Mammary epithelial cell (primary cell): ENCODE measurements at regions of chr4 and their contacts with region 1.

Region 1: GRCh38 chr4:78056265-78057129 is 626 bp upstream of the FRAS1 start:
- DNase-seq: peak; percentile 83
- H3K4me3 ChIP-seq: peak overlapping the region; percentile 73 to 81 (median 76)
- H3K27ac ChIP-seq: peak overlapping the region; percentile 34
- H3K4me1 ChIP-seq: peaks cover 6% of the 10 kb centered on the region
- H3K27me3 ChIP-seq: no peaks in the 10 kb centered on the region
- CTCF ChIP-seq: peak in 1 of 2 donors; percentile 8

Region 2: DNA sequence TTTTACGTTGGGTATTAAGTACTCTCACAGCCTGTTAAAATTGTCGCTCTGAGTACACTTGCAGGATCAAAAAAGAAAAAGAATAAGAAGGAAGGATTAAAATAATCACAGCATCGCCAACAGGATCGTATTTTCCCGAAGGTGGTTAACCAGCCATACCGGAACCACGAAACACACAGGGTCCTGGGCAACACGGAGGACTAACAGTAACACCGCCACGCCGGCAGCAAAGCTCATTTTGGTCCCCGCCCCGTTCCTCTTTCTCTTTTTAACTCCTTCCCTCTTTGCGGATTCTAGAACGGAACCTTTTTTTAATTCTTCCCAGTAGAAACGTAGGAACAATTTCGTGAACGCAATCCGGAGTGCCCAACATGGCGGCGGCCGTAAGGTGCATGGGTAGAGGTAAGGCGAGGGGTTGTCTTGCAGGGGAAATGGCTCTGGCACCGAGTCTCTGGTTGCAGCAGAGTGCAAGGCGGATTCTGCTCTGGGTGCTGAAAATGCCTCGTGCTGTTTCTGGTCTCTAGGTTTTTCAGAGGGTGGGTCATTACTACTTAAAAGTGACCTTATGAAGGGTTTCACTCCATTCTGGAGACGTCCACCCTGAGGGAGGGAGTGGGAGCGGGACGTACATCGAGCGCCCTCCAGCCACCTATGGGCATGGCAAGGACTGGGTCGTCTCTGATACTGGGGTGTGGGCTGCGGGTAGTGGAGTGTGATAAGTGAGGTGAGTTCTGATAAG is 193.8 kb before region 1 on chr4 and contains the start of gene MRPL1:
- CTCF ChIA-PET with region 1: no interaction called
- dilution Hi-C with region 1: no loop called
- in situ Hi-C with region 1: no loop called
- intact Hi-C with region 1: loop called (anchors 2 kb)
- DNase-seq: peak; percentile 94
- H3K4me3 ChIP-seq: peak within 1 kb of the TSS; percentile 63 to 94 (median 78)
- H3K27ac ChIP-seq: peak within 1 kb of the TSS; percentile 97
- H3K4me1 ChIP-seq: peaks cover 8% of the 10 kb centered on the region
- H3K27me3 ChIP-seq: no peaks in the 10 kb centered on the region
- CTCF ChIP-seq: no peak
- total RNA-seq, gene MRPL1: 24.8 to 40.9 TPM

Region 3: DNA sequence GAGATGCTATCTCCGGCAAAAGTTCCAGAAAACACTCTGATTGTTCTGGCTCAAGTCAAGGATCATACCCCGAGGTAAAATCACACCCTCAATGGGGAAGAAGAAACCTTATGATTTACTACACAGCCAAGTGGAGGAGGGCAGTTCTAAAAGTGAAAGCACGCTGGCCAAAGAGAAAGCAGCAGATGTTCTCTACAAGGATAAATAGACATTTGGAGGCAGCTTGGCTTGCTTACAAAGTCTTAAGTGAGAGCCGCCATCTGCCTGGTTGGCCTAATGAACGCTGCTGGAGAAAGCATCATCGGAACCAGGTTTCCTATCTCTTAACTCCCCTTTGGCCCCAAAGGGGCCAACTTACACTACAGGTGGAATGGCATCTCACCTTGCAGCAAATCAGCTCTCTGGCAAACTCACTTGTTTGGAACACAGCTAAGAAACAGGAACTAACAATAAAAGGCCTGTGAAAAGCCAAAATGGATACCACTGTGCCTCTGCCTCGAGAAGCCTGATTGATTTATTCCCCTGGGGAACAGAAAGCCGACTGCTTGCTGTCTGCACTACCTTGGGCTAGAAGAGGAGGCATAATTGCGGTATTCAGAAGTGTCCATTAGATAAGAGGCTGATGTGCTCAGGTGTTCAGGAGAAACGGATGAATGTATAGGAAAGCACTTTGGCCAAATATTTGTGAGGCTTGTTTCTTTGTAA is 23.4 kb after region 1 on chr4:
- CTCF ChIA-PET with region 1: interaction called, 14 read pairs
- dilution Hi-C with region 1: no loop called
- in situ Hi-C with region 1: no loop called
- intact Hi-C with region 1: no loop called
- DNase-seq: no peak
- H3K4me3 ChIP-seq: no peak overlapping the region
- H3K27ac ChIP-seq: no peak overlapping the region
- H3K4me1 ChIP-seq: no peaks in the 10 kb centered on the region
- H3K27me3 ChIP-seq: no peaks in the 10 kb centered on the region
- CTCF ChIP-seq: no peak

Region 4: GRCh38 chr4:78417603-78418002 is 361.1 kb after region 1 on chr4:
- CTCF ChIA-PET with region 1: no interaction called
- dilution Hi-C with region 1: no loop called
- in situ Hi-C with region 1: no loop called
- intact Hi-C with region 1: loop called (anchors 1 kb)
- DNase-seq: peak; percentile 52
- H3K4me3 ChIP-seq: no peak overlapping the region
- H3K27ac ChIP-seq: peak overlapping the region; percentile 15
- H3K4me1 ChIP-seq: peaks cover 13% of the 10 kb centered on the region
- H3K27me3 ChIP-seq: no peaks in the 10 kb centered on the region
- CTCF ChIP-seq: no peak

Region 5: GRCh38 chr4:78551479-78552351 is 495.2 kb after region 1 on chr4 and contains the start of gene ANXA3:
- CTCF ChIA-PET with region 1: no interaction called
- dilution Hi-C with region 1: no loop called
- in situ Hi-C with region 1: no loop called
- intact Hi-C with region 1: loop called (anchors 1 kb)
- DNase-seq: peak; percentile 70
- H3K4me3 ChIP-seq: peak within 1 kb of the TSS; percentile 76 to 97 (median 82)
- H3K27ac ChIP-seq: peak within 1 kb of the TSS; percentile 100
- H3K4me1 ChIP-seq: peaks cover 39% of the 10 kb centered on the region
- H3K27me3 ChIP-seq: no peaks in the 10 kb centered on the region
- CTCF ChIP-seq: peak in 1 of 2 donors; percentile 0
- total RNA-seq, gene ANXA3: 325 to 422 TPM

Region 6: DNA sequence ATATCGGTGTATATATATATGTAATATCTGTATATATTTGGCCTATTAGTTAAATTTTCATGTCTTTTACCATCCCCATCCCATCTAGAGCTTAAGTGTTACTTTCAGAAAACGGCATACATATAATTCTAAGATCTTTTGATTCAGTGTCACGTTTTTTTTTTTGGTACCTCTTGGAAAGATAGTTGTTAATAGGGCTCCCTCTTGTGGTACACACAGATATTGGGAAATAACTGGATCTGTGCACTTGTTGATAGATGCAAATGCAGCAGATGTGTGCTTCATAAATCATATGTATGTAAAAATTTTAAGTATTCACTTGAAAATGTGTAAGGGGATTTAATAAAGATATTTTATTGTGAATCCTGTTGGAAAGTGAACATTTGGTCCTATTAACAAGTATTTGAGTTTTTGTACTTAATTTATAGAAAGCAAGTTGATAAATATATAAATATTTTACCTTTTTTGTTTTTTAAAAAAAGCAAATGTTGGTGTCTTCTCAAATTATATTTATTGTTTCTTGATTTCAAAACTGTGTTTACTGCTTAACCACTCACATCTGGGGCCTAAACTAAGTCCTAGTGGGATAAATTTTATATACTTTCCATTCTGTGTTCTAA is 808.0 kb after region 1 on chr4:
- CTCF ChIA-PET with region 1: no interaction called
- dilution Hi-C with region 1: no loop called
- in situ Hi-C with region 1: no loop called
- intact Hi-C with region 1: loop called (anchors 2 kb)
- DNase-seq: peak; percentile 58
- H3K4me3 ChIP-seq: no peak overlapping the region
- H3K27ac ChIP-seq: no peak overlapping the region
- H3K4me1 ChIP-seq: no peaks in the 10 kb centered on the region
- H3K27me3 ChIP-seq: no peaks in the 10 kb centered on the region
- CTCF ChIP-seq: peak; percentile 73